ENCODE measurements at regions of chr3 and their contacts with region 1.

Region 1: DNA sequence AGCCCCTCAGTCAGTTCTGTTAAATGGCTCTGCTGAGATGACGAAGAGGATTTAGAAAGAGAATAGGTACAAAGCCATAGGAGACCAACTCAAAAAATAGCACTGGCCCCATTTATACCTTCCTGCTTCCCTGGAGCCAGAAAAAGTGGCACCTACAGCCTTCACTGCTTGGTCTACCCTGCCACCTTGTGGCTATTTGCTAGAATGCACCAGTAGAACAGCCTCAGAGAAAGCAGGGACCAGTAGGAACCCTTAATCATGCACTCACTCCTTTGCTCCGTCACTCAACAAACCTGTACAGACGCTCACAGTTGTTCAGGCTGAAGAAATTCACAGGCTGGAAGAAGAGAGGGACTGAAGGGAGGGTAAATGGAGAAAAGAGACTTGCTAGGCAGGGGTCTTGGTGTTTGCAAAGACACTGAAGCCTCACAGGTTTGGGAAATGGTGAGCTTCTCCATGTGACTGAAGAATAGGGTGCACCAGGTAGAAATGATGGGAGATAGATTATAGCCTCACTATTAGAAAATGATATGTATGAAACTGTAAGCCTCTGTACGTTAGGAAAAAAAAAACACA is 12.1 kb upstream of the RTP2 start:
- DNase-seq: peak; percentile 74
- ATAC-seq: peak; percentile 86
- H3K4me3 ChIP-seq: no peak overlapping the region
- H3K4me3 Mint-ChIP-seq: no peak overlapping the region
- H3K27ac ChIP-seq: no peak overlapping the region
- H3K27ac Mint-ChIP-seq: no peak overlapping the region
- H3K4me1 ChIP-seq: no peaks in the 10 kb centered on the region
- H3K4me1 Mint-ChIP-seq: no peaks in the 10 kb centered on the region
- H3K27me3 ChIP-seq: no peaks in the 10 kb centered on the region
- H3K27me3 Mint-ChIP-seq: no peaks in the 10 kb centered on the region
- CTCF ChIP-seq: peak; percentile 97

Region 2: GRCh38 chr3:187325632-187326031 is 388.9 kb before region 1 on chr3:
- CTCF ChIA-PET with region 1: interaction called, 184 read pairs
- POLR2A ChIA-PET with region 1: no interaction called
- intact Hi-C with region 1: no loop called
- DNase-seq: no peak
- ATAC-seq: no peak
- H3K4me3 ChIP-seq: no peak overlapping the region
- H3K4me3 Mint-ChIP-seq: no peak overlapping the region
- H3K27ac ChIP-seq: no peak overlapping the region
- H3K27ac Mint-ChIP-seq: no peak overlapping the region
- H3K4me1 ChIP-seq: no peaks in the 10 kb centered on the region
- H3K4me1 Mint-ChIP-seq: no peaks in the 10 kb centered on the region
- H3K27me3 ChIP-seq: peaks cover 0 to 17% (median 3%) of the 10 kb centered on the region in 4 experiments
- H3K27me3 Mint-ChIP-seq: peaks cover 21% of the 10 kb centered on the region
- CTCF ChIP-seq: no peak

Region 3: DNA sequence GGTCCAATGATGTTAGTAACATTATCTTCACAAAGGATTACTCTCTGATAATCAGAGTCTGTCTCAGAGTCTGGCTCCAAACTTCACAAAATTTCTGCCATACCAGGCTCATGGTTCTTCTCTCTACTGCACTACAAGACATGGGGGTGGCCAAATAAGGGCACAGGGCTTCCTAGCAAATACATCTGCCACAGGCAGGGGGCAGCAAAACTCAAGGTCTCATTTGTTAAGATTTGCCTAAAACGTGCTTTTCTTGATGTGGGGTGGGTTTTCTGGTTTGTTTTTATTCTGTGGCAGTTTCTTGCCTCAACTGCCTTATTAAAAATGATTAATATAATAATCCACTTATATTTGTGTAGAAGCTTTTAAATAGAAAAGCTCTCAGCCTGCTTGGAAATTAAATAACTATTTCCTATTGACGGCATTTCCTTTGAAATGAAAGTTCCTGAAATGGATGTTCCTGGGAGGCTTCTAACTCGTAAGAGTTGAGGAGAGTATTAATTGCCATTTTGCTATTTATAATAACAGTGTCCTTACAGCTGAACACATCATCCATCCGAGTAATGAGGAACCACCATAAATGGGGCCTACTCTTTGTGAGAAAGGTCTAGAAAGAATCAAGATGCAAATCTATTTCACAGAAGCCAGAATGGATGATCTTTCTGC is 98.1 kb before region 1 on chr3:
- CTCF ChIA-PET with region 1: interaction called, 3 read pairs
- POLR2A ChIA-PET with region 1: no interaction called
- intact Hi-C with region 1: loop called (anchors 1 kb)
- DNase-seq: peak; percentile 56
- ATAC-seq: no peak
- H3K4me3 ChIP-seq: no peak overlapping the region
- H3K4me3 Mint-ChIP-seq: no peak overlapping the region
- H3K27ac ChIP-seq: no peak overlapping the region
- H3K27ac Mint-ChIP-seq: no peak overlapping the region
- H3K4me1 ChIP-seq: no peaks in the 10 kb centered on the region
- H3K4me1 Mint-ChIP-seq: no peaks in the 10 kb centered on the region
- H3K27me3 ChIP-seq: peaks cover 0 to 7% (median 2%) of the 10 kb centered on the region in 4 experiments
- H3K27me3 Mint-ChIP-seq: peaks cover 24% of the 10 kb centered on the region
- CTCF ChIP-seq: peak; percentile 87

Measured in B cell (primary cell).